Activated CD4-positive, alpha-beta T cell treated with anti-CD3 and anti-CD28 coated beads for 36 hours (primary cell): ENCODE measurements at regions of chr12 and their contacts with region 1.

Region 1: GRCh38 chr12:45388545-45388944 is 172.7 kb downstream of the ANO6 start:
- DNase-seq: no peak
- ATAC-seq: no peak
- H3K4me3 Mint-ChIP-seq: no peak overlapping the region
- H3K27ac Mint-ChIP-seq: no peak overlapping the region
- H3K4me1 Mint-ChIP-seq: no peaks in the 10 kb centered on the region
- H3K27me3 Mint-ChIP-seq: no peaks in the 10 kb centered on the region

Region 2: DNA sequence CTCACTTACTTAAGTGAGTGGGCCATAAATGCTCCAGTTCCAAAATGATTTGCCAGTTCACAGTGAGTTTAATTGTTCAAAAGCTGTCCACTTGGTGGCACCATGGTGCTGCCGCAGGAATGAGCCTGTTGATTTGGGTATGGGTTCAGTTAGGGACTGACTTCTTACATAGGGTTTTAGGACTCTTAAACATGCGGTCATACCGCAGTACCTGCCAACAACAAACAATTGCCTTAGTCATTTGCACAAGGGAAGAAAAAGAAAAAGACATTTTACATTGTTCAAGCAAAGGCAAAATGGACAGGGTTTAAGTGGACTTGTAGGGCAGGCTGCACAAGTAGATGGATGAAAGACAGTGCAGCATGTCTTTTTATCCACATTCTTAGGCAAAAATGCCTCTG is 257.7 kb before region 1 on chr12:
- CTCF ChIA-PET with region 1: interaction called, 11 read pairs
- POLR2A ChIA-PET with region 1: no interaction called
- intact Hi-C with region 1: no loop called
- DNase-seq: peak; percentile 67
- ATAC-seq: peak; percentile 84
- H3K4me3 Mint-ChIP-seq: no peak overlapping the region
- H3K27ac Mint-ChIP-seq: no peak overlapping the region
- H3K4me1 Mint-ChIP-seq: no peaks in the 10 kb centered on the region
- H3K27me3 Mint-ChIP-seq: peaks cover 9% of the 10 kb centered on the region

Region 3: GRCh38 chr12:45170456-45171042 is 218.0 kb before region 1 on chr12:
- CTCF ChIA-PET with region 1: interaction called, 15 read pairs
- POLR2A ChIA-PET with region 1: no interaction called
- intact Hi-C with region 1: loop called (anchors 1 kb)
- DNase-seq: peak; percentile 92
- ATAC-seq: no peak
- H3K4me3 Mint-ChIP-seq: no peak overlapping the region
- H3K27ac Mint-ChIP-seq: no peak overlapping the region
- H3K4me1 Mint-ChIP-seq: no peaks in the 10 kb centered on the region
- H3K27me3 Mint-ChIP-seq: no peaks in the 10 kb centered on the region

Region 4: GRCh38 chr12:45183246-45183645 is 205.3 kb before region 1 on chr12:
- CTCF ChIA-PET with region 1: interaction called, 14 read pairs
- POLR2A ChIA-PET with region 1: no interaction called
- intact Hi-C with region 1: loop called in 1 of 2 experiments (anchors 1 kb)
- DNase-seq: no peak
- ATAC-seq: no peak
- H3K4me3 Mint-ChIP-seq: no peak overlapping the region
- H3K27ac Mint-ChIP-seq: no peak overlapping the region
- H3K4me1 Mint-ChIP-seq: no peaks in the 10 kb centered on the region
- H3K27me3 Mint-ChIP-seq: no peaks in the 10 kb centered on the region